Activated CD4-positive, alpha-beta T cell treated with anti-CD3 and anti-CD28 coated beads for 36 hours (primary cell): ENCODE measurements at regions of chr22 and their contacts with region 1.

Region 1: GRCh38 chr22:25362215-25362882 is 142.9 kb downstream of the CRYBB2 start:
- DNase-seq: peak; percentile 85
- ATAC-seq: peak; percentile 88
- H3K4me3 Mint-ChIP-seq: no peak overlapping the region
- H3K27ac Mint-ChIP-seq: no peak overlapping the region
- H3K4me1 Mint-ChIP-seq: peaks cover 1% of the 10 kb centered on the region
- H3K27me3 Mint-ChIP-seq: no peaks in the 10 kb centered on the region

Region 2: DNA sequence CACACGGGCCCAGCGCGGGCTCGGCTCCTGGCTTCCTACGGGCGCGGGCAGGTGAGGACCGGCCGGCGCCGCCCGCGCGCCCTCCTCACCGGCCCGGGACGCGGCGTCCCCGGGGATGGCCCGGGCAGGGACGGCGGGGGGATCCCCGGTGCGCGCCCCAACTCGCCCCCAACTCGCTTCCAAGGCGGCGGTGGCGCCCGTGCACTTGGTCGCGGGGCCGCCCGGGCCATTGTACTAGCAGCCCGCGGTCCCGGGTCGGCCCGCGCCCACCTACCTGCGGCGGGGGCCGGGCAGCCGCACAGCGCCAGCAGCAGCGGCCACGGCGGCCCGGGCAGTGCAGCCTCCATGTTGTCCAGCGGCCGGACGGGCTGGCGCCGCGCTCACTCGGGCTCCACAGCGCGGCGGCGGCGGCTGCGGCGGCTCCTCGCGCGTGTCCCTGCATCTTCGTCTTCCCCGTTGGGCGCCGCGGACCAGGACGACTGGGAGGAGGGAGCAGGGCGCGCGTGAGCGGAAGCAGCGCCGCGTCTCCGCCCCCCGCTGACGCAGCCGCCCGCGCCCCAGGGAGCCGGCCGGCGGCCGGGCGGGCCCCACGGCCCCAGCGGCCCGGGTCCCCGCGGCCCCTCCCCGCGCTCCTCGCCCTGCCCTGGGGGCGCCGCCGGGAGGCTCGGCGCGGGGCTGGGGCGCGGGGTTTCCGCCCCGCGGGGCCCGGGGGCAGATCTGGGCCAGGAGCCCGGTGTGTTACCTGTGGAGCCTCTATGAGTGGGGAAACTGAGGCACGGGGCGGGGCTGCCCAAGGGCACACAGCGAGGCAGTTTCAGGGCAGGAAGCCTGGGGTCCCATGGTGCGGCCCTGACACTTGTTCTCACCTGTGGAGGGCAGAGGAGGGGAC is 42.8 kb after region 1 on chr22:
- CTCF ChIA-PET with region 1: interaction called, 3 read pairs
- POLR2A ChIA-PET with region 1: no interaction called
- intact Hi-C with region 1: loop called in 1 of 2 experiments (anchors 5 kb)
- DNase-seq: peak; percentile 81
- ATAC-seq: peak; percentile 85
- H3K4me3 Mint-ChIP-seq: peak overlapping the region; percentile 86
- H3K27ac Mint-ChIP-seq: peak overlapping the region; percentile 58
- H3K4me1 Mint-ChIP-seq: peaks cover 25% of the 10 kb centered on the region
- H3K27me3 Mint-ChIP-seq: no peaks in the 10 kb centered on the region

Region 3: DNA sequence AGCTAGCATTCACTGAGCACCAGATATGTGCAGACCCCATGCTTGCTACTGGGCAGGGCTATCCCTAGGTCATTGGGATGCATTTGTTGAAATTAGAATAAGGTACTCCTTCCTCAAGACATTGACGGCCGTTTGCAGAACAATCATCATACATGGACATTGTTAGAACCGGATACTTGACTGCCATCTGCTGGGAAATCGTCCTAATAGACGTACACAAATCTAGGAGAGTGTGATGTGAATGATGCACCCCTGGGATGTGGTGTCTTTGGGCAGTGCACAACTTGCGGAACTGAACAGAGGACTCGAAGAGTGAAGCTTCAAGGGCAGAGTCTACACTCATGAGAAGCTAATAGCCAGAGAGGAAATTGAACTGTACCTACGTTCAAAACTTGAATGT is 415.5 kb after region 1 on chr22:
- CTCF ChIA-PET with region 1: no interaction called
- POLR2A ChIA-PET with region 1: no interaction called
- intact Hi-C with region 1: loop called (anchors 5 to 10 kb)
- DNase-seq: peak; percentile 16
- ATAC-seq: no peak
- H3K4me3 Mint-ChIP-seq: no peak overlapping the region
- H3K27ac Mint-ChIP-seq: no peak overlapping the region
- H3K4me1 Mint-ChIP-seq: peaks cover under 1% of the 10 kb centered on the region
- H3K27me3 Mint-ChIP-seq: peaks cover 2% of the 10 kb centered on the region